Tibial artery (tissue), 4 donors: ENCODE measurements at regions of chr1 and their contacts with region 1.

Region 1: GRCh38 chr1:6367381-6368012 is 26.1 kb downstream of the ACOT7 start:
- DNase-seq: no peak
- H3K4me3 ChIP-seq: no peak overlapping the region
- H3K27ac ChIP-seq: no peak overlapping the region
- H3K4me1 ChIP-seq: peaks cover 0 to 16% (median 5%) of the 10 kb centered on the region in 4 donors
- H3K27me3 ChIP-seq: no peaks in the 10 kb centered on the region
- CTCF ChIP-seq: no peak

Region 2: DNA sequence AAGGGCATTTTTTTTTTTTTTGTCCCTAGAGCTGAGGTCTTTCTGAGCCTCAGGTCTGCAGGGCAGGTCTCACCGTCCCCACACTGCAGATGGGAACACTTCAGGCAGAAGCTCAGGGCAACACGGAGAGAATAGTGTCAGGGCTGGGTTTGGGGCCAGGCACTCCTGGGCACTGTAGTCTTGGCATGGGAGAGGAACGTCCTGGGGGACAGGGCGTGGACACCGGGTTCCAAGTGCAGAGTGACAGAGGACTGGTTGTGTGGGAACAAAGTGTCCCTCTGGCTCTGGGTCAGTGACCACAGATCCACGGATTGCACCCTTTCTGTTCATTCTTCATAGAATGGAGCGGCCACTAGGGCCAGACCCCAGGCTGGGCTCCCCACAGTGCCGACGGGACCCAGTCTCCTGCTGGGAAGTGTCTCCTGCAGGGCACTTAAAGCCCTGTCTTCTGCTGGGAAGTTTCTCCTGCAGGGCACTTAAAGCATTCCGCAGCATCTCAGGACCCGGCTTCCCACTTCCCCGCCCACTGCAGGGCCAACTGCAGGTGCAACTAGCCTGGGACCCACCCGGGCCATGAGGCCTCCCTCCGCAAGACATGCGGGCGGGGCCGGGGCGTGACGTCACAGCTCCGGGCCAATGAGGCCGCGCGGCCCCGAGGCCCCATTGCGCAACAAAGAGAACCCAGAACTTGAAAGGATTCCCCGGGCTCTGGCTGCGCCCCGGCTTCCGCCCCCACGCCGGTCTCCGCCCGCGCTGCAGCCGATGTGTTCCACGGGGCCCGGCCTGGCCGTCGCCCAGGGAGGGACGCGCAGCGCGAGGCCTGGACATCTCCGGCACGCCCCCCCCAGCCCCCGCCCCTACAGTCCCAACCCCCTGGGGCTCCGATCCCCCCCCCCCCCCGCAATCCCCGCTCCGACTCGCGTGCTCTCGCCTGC is 107.7 kb before region 1 on chr1:
- intact Hi-C with region 1: no loop called
- DNase-seq: peak; percentile 83
- H3K4me3 ChIP-seq: peak overlapping the region; percentile 41 to 45
- H3K27ac ChIP-seq: no peak overlapping the region
- H3K4me1 ChIP-seq: peaks cover 0 to 28% (median 14%) of the 10 kb centered on the region in 4 donors
- H3K27me3 ChIP-seq: peaks cover 0 to 75% of the 10 kb centered on the region in 2 donors
- CTCF ChIP-seq: no peak

Region 3: DNA sequence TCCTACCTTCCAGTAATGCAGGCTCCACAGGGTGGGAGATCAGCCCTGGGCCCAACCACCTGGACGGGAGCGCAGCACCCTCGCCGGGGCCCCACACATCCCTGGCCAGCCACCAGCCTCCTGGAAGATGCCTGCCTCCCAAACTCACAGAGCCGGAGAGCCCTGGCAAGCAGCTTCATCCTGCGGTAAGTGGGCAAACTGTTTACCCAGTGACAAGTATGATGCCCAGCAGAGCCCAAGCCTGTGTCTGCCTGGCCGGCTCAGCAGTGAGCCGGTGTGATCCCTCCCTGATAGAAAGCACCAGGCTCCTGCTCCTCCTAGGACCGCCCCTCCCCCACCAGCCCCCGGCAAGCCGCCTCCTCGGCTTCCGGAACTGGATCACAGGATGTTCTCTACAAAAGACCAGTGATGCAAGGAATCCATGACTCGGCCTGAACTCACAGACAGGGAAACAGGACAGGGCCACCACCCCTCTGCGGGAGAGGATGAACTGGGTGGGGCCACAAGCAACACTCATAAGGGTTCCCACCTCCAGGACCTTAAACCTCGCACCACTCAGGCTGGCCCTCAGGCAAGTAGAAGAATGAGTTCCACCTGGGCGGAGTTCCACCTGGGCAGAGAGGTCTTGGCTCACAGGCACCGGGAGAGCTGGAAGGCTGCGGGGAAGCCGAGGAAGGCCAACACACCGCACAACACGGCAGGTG is 18.1 kb after region 1 on chr1:
- intact Hi-C with region 1: loop called (anchors 2 kb)
- DNase-seq: no peak
- H3K4me3 ChIP-seq: no peak overlapping the region
- H3K27ac ChIP-seq: no peak overlapping the region
- H3K4me1 ChIP-seq: peaks cover 0 to 8% (median 0%) of the 10 kb centered on the region in 4 donors
- H3K27me3 ChIP-seq: no peaks in the 10 kb centered on the region
- CTCF ChIP-seq: no peak

Region 4: GRCh38 chr1:6475381-6476133 is 108.1 kb after region 1 on chr1:
- intact Hi-C with region 1: no loop called
- DNase-seq: no peak
- H3K4me3 ChIP-seq: no peak overlapping the region
- H3K27ac ChIP-seq: no peak overlapping the region
- H3K4me1 ChIP-seq: no peaks in the 10 kb centered on the region
- H3K27me3 ChIP-seq: peaks cover 0 to 5% of the 10 kb centered on the region in 2 donors
- CTCF ChIP-seq: peak; percentile 77 to 91

Region 5: GRCh38 chr1:6784560-6785317 is 417.2 kb after region 1 on chr1:
- intact Hi-C with region 1: no loop called
- DNase-seq: peak; percentile 100
- H3K4me3 ChIP-seq: peak overlapping the region; percentile 81
- H3K27ac ChIP-seq: peak overlapping the region; percentile 98
- H3K4me1 ChIP-seq: peaks cover 0 to 47% (median 22%) of the 10 kb centered on the region in 4 donors
- H3K27me3 ChIP-seq: no peaks in the 10 kb centered on the region
- CTCF ChIP-seq: peak in 1 of 2 experiments; percentile 48